GM10248 (cell line): ENCODE measurements at regions of chr1 and their contacts with region 1.

Region 1: DNA sequence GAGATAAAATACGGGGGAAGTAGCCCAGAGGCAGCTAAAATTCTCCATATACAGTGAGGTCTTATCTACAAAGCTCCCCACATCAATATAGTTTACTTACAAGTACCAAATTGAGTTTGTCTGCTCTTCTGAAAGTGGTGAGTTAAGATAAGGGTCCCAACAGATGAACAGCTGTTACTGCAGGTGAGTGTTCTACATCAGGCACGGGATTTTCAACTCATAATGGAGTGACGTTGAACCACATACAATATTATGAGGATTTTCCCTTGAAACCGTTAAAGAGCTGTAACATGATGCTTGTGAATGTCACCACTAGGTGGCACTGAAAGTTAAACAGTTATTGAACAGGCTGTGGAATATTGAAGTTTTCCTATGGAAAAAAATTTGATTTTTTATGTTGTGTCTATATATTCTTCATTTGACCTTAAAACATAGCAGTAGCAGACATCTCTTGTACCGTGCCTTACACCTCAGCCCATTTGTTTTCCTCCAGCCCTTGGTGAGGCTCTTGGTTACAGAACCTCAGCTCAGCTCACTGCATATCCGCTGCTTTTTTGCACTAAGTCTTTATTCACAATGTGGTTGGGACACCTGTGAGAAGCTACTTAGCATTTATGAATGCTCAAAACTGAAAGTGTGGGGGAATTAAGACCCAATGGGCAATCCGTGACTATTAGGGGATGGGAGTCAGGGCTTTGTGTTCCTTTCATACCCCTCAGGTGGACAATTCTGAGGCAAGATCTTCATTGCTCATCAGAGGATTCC is 23.2 kb downstream of the CD1D start:
- DNase-seq: peak; percentile 35
- CTCF ChIP-seq: peak; percentile 74

Region 2: DNA sequence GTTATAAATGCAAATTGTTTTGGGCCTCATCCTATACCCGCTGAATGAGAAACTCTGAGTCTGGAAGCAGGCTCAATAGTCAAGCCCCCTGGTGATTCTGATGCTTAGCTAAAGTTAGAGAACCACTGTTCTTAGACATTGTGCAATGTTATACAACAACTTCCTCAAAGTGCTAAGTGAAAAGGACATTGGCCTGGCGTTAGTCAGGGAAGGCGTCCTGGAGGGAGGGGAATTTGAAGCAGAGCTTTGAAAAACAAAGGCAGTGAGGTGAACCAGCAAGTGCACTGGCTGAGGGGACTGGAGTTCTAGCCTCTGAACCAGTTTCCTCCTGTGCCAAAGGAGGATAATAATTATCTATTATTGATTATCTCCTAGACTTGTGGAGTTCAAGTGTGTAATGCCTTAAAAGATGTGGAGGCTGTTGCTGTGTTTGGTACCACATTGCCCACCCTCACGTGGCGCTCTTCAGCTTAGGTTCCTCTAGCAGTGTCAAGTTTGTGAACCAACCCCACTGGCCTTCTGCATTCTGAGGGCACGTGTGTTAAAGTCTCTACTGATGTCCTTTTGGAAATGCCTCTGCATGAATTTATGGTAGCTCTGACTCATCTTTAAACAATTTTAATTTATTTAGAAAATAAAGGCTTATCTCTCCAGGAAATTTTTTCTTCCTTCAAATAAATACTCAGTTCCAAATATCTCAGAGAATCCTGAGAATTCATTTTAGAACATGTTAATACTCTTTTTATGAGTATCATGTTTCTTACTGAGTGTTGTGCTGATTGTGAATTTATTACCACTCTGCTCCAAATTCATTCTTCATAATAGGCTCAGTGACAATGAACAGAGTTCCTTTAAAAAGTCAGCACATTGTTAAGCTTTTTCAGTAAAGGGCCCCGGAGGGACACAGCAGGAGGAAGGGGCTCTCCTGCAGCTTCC is 17.8 kb before region 1 on chr1:
- CTCF ChIA-PET with region 1: interaction called, 24 read pairs
- POLR2A ChIA-PET with region 1: no interaction called
- DNase-seq: no peak
- CTCF ChIP-seq: no peak

Region 3: GRCh38 chr1:158324395-158324794 is 120.5 kb after region 1 on chr1:
- CTCF ChIA-PET with region 1: interaction called, 53 read pairs
- POLR2A ChIA-PET with region 1: no interaction called
- DNase-seq: peak; percentile 27
- CTCF ChIP-seq: no peak

Region 4: DNA sequence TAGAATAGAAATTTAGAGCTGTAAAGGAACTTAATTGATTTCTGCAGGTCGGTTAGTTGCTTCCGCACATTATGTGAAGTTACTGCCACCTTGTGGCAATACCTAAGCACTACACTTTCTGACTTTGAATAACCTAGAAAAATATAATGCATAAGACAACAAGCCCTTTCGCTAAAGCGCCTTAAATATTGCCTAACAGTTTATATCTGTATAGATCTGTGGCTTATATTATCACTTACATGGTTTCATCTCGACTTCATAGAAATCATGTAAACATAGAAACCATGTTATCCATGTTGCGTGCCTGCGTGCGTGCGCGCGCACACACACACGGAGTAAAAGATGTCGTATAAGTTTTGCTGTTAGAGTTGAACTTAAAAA is 794.9 kb after region 1 on chr1:
- CTCF ChIA-PET with region 1: interaction called, 17 read pairs
- POLR2A ChIA-PET with region 1: no interaction called
- DNase-seq: peak; percentile 56
- CTCF ChIP-seq: peak; percentile 85